Mammary epithelial cell (primary cell): ENCODE measurements at regions of chr12 and their contacts with region 1.

Region 1: DNA sequence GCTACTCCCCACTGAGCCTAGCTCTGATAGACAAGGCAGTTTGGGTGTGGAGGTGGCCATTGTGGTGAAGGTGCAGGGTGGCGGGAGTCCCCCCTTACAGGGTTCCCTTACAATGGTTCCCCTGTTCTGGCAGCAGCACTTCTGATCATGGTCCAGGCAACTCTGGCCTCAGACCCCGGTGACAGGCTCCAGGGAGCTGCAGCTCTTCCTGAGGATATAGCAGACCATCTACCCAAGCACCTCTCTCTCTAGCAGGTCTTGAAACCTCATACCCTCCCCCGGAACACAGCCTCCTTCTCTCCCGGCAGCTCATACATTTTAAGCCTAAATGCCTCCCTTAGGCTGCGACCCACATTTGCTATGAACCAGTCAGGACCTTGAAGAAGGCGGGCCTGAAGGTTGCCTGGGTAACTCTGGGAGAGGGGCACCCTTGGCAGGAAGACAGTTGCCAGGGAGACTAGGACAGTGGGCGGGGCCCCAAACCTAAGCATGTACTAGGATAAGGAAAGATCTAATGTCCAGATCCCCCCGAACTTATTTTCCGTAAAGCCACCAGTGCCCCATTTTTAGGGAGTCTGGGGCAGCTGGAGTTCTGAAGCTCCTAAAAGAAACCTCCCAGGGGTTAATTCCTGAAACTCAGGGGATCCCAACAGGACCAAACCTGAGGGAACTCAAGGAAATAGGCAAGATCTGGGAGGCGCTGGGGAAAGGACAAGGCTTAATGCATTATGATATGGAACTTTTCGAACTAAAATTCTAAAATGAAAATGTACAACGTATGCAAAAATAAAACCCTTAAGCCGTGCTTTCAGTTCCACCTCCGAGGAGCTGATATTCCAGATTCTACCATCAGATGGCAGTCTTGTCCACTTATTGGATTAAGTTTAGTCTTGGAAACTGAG is 4.5 kb upstream of the GDF11 start:
- DNase-seq: peak; percentile 70
- H3K4me3 ChIP-seq: peak overlapping the region; percentile 55 to 64 (median 56)
- H3K27ac ChIP-seq: peak overlapping the region; percentile 31
- H3K4me1 ChIP-seq: peaks cover 8% of the 10 kb centered on the region
- H3K27me3 ChIP-seq: no peaks in the 10 kb centered on the region
- CTCF ChIP-seq: peak; percentile 73 to 82

Region 2: DNA sequence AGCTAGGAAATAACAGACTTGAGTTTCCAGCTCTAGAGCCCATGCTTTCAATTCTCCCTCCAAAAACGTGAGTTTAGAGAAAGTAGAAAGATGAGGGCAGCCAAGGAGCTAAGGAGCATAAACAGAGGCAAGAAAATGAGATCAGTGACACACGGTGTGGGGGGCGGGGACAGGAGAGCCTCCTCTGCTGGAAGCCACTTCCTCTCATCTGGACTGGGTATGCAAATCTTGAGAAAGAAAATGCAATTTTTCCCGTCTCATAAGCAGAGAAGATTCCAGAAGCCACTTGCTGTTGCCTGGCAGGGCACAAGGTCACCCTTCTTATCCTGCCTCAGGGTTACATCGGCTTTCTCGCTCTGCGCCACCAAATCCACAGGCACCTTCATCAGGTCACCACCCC is 95.7 kb before region 1 on chr12:
- CTCF ChIA-PET with region 1: no interaction called
- dilution Hi-C with region 1: no loop called
- in situ Hi-C with region 1: no loop called
- intact Hi-C with region 1: loop called (anchors 1 kb)
- DNase-seq: no peak
- H3K4me3 ChIP-seq: no peak overlapping the region
- H3K27ac ChIP-seq: no peak overlapping the region
- H3K4me1 ChIP-seq: no peaks in the 10 kb centered on the region
- H3K27me3 ChIP-seq: no peaks in the 10 kb centered on the region
- CTCF ChIP-seq: no peak

Region 3: GRCh38 chr12:55817346-55818139 is 79.2 kb after region 1 on chr12 and contains the starts of genes ORMDL2 and SARNP:
- CTCF ChIA-PET with region 1: no interaction called
- dilution Hi-C with region 1: no loop called
- in situ Hi-C with region 1: no loop called
- intact Hi-C with region 1: loop called (anchors 2 kb)
- DNase-seq: peak; percentile 100
- H3K4me3 ChIP-seq: peak within 1 kb of the TSS; percentile 76 to 95 (median 90)
- H3K27ac ChIP-seq: peak within 1 kb of the TSS; percentile 93
- H3K4me1 ChIP-seq: peaks cover 18% of the 10 kb centered on the region
- H3K27me3 ChIP-seq: no peaks in the 10 kb centered on the region
- CTCF ChIP-seq: no peak
- total RNA-seq, gene ORMDL2: 24.3 to 91.3 TPM
- total RNA-seq, gene SARNP: 34.7 to 72.9 TPM

Region 4: DNA sequence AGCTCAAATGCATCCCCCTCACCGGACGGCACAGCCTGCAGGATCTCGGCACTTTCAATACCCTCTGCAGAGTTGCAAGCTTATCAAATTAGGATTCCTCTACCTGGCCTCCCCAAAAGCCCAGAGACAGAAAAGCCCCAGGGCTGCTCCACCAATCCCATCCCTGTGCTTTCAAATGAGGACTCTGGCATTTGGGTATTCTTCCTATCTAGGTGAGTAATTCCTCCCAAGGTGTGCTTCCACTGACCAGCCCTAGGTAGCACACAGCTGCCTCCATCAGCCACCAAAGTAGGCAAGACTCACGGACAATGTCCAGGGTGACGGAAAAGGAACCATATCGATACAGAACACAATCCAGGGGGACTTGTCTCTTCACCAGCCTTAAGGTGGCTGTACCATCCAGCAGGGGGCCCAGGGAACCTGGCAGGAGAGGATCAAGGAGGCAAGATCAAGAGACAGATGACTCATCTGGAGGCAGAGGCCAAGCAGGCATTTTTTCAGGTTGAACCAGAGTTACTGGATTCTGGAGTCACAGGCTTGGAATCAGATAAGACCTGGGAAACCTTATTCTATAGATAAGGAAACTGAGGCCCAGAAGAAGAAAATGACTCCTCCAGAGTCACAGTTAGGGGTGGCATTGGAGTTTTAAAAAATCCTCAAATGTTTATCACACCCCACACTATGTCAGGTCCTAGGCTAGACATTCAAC is 217.6 kb after region 1 on chr12:
- CTCF ChIA-PET with region 1: interaction called, 10 read pairs
- dilution Hi-C with region 1: no loop called
- in situ Hi-C with region 1: no loop called
- intact Hi-C with region 1: no loop called
- DNase-seq: peak; percentile 88
- H3K4me3 ChIP-seq: no peak overlapping the region
- H3K27ac ChIP-seq: no peak overlapping the region
- H3K4me1 ChIP-seq: peaks cover 24% of the 10 kb centered on the region
- H3K27me3 ChIP-seq: no peaks in the 10 kb centered on the region
- CTCF ChIP-seq: peak; percentile 84 to 88

Region 5: GRCh38 chr12:56078990-56079664 is 340.8 kb after region 1 on chr12:
- CTCF ChIA-PET with region 1: no interaction called
- dilution Hi-C with region 1: no loop called
- in situ Hi-C with region 1: loop called in 1 of 2 experiments (anchors 25 kb)
- intact Hi-C with region 1: no loop called
- DNase-seq: peak; percentile 81
- H3K4me3 ChIP-seq: peak overlapping the region; percentile 55 to 82 (median 73)
- H3K27ac ChIP-seq: peak overlapping the region; percentile 65
- H3K4me1 ChIP-seq: peaks cover 16% of the 10 kb centered on the region
- H3K27me3 ChIP-seq: no peaks in the 10 kb centered on the region
- CTCF ChIP-seq: peak; percentile 77 to 92

Region 6: GRCh38 chr12:56224102-56224701 is 485.8 kb after region 1 on chr12 and contains the start of gene NABP2:
- CTCF ChIA-PET with region 1: interaction called, 3 read pairs
- dilution Hi-C with region 1: no loop called
- in situ Hi-C with region 1: loop called in 1 of 2 experiments (anchors 25 kb)
- intact Hi-C with region 1: no loop called
- DNase-seq: peak; percentile 98
- H3K4me3 ChIP-seq: peak within 1 kb of the TSS; percentile 69 to 72 (median 70)
- H3K27ac ChIP-seq: peak within 1 kb of the TSS; percentile 30
- H3K4me1 ChIP-seq: peaks cover 21% of the 10 kb centered on the region
- H3K27me3 ChIP-seq: no peaks in the 10 kb centered on the region
- CTCF ChIP-seq: peak; percentile 65 to 82
- total RNA-seq, gene NABP2: 18.3 to 37.5 TPM